GM12878 (cell line): ENCODE measurements at regions of chr15 and their contacts with region 1.

Region 1: GRCh38 chr15:71893691-71894090 is 83.3 kb downstream of the NR2E3 start:
- DNase-seq: no peak
- ATAC-seq: no peak
- H3K4me3 ChIP-seq: no peak overlapping the region
- H3K27ac ChIP-seq: no peak overlapping the region
- H3K4me1 ChIP-seq: peaks cover 12% of the 10 kb centered on the region
- H3K27me3 ChIP-seq: no peaks in the 10 kb centered on the region
- CTCF ChIP-seq: no peak
- EP300 ChIP-seq: no peak
- POLR2A ChIP-seq: no peak
- RAD21 ChIP-seq: no peak

Region 2: GRCh38 chr15:71547011-71547410 is 346.7 kb before region 1 on chr15:
- CTCF ChIA-PET with region 1: no interaction called
- POLR2A ChIA-PET with region 1: no interaction called
- RAD21 ChIA-PET with region 1: no interaction called
- SMC1A ChIA-PET with region 1: no interaction called
- in situ Hi-C with region 1: no loop called
- intact Hi-C with region 1: no loop called
- DNase-seq: no peak
- ATAC-seq: no peak
- H3K4me3 ChIP-seq: no peak overlapping the region
- H3K27ac ChIP-seq: no peak overlapping the region
- H3K4me1 ChIP-seq: no peaks in the 10 kb centered on the region
- H3K27me3 ChIP-seq: 0 out of 4 replicates have a peak, but pooled peaks cover 0 to 1% of the 10 kb centered on the region in 2 experiments
- CTCF ChIP-seq: no peak
- EP300 ChIP-seq: no peak
- POLR2A ChIP-seq: no peak
- RAD21 ChIP-seq: no peak

Region 3: GRCh38 chr15:71883447-71883846 is 10.2 kb before region 1 on chr15:
- CTCF ChIA-PET with region 1: interaction called, 4 read pairs
- POLR2A ChIA-PET with region 1: no interaction called
- RAD21 ChIA-PET with region 1: no interaction called
- SMC1A ChIA-PET with region 1: interaction called, 11 read pairs
- in situ Hi-C with region 1: no loop called
- intact Hi-C with region 1: no loop called
- DNase-seq: peak; percentile 20
- ATAC-seq: peak; percentile 70
- H3K4me3 ChIP-seq: no peak overlapping the region
- H3K27ac ChIP-seq: no peak overlapping the region
- H3K4me1 ChIP-seq: peaks cover 11% of the 10 kb centered on the region; the same call in 1 of the 2 replicates
- H3K27me3 ChIP-seq: no peaks in the 10 kb centered on the region
- CTCF ChIP-seq: no peak
- EP300 ChIP-seq: no peak
- POLR2A ChIP-seq: no peak
- RAD21 ChIP-seq: no peak

Region 4: DNA sequence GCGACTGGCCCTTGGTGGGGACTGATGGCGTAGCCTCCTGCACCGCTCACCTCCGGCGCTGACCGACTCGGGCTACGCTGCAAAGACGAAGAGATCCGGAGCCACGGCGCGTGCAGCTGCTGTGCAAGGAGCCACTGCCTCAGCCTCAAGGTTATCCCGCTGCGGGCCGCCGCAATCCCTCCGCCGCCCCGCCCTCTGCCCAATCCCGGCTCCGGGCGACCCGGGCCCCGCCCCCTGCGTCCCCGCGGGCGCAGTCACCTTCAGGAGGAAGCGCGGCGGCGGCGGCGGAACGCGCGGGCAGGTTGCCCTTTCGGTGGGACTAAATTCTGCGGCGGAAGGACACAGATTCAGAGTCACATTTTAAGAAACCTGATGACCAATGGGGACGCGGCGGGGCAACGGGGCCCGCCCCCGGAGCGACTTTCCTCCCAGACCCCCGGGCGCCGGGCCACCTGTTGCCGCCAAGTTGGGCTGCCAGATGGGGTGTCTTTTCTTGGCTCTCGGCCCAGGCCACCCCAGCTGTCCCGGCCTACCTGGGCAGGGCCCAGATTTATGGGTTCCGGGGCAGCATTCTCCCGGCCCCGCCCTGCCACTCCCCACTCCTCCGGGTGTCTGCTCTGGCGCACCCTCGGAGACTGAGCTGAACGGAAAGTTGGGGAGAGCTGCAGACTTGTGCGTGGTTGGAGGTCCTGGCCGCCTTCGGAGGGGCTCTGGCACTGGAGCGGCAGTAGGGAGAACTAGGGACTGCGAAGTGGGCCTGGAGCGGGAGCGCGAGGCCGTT is 337.6 kb after region 1 on chr15 and contains the start of gene PKM:
- CTCF ChIA-PET with region 1: no interaction called
- POLR2A ChIA-PET with region 1: no interaction called
- RAD21 ChIA-PET with region 1: no interaction called
- SMC1A ChIA-PET with region 1: no interaction called
- in situ Hi-C with region 1: no loop called
- intact Hi-C with region 1: no loop called
- DNase-seq: peak; percentile 84
- ATAC-seq: peak; percentile 57
- H3K4me3 ChIP-seq: peak within 1 kb of the TSS; percentile 96
- H3K27ac ChIP-seq: peak within 1 kb of the TSS; percentile 97
- H3K4me1 ChIP-seq: peaks cover 5% of the 10 kb centered on the region; the same call in 1 of the 2 replicates
- H3K27me3 ChIP-seq: no peaks in the 10 kb centered on the region
- CTCF ChIP-seq: no peak
- EP300 ChIP-seq: peak; percentile 24 to 34; a peak in 1 of 4 replicates
- POLR2A ChIP-seq: peak; percentile 95
- RAD21 ChIP-seq: no peak
- polyA plus RNA-seq, gene PKM: 491 to 500 TPM